GM13976 (cell line): ENCODE measurements at regions of chr4 and their contacts with region 1.

Region 1: GRCh38 chr4:74133786-74134499 is 24.0 kb upstream of the MTHFD2L start:
- DNase-seq: peak; percentile 21
- CTCF ChIP-seq: peak; percentile 68

Region 2: DNA sequence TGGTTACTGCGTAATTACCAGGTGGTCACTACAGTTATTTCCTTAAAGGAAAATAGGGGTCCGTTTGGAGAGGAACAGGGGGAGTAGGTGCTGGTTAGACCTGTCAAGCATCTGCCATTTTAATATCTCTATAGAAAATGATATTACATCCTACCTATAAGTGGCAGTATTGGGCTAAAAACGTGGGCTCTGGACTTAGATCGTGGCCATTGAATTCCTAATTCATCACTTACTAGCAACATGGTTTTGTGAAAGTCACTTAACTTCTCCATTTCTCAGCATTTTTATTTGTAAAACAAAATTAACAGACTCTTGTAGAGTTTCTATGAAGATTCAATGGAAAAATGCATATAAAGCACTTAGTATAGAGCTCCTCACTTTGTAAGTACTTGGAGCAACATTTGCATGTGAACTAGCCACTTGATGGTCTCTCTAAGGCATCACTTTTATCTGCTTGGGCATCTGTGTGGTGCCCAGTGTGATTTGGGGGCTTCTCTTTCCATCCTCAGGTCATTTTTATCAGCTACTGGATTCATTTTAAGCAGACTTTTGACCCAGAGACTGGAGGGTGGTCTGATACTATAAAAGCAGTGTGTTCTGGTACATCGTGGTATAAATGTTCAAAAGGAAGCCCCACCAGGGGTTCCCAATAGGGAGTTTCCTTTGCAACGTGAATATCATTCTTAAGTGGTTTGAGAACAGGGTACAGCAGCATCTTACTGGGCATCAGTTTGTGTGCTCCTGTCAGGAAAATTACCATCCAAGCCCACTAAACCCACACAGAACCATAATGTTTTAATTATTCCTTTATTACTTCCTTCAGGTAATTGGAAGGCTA is 471.0 kb before region 1 on chr4:
- in situ Hi-C with region 1: loop called (anchors 10 kb)
- DNase-seq: peak; percentile 24
- CTCF ChIP-seq: peak; percentile 10